Activated CD4-positive, alpha-beta T cell treated with anti-CD3 and anti-CD28 coated beads for 36 hours (primary cell): ENCODE measurements at regions of chr9 and their contacts with region 1.

Region 1: DNA sequence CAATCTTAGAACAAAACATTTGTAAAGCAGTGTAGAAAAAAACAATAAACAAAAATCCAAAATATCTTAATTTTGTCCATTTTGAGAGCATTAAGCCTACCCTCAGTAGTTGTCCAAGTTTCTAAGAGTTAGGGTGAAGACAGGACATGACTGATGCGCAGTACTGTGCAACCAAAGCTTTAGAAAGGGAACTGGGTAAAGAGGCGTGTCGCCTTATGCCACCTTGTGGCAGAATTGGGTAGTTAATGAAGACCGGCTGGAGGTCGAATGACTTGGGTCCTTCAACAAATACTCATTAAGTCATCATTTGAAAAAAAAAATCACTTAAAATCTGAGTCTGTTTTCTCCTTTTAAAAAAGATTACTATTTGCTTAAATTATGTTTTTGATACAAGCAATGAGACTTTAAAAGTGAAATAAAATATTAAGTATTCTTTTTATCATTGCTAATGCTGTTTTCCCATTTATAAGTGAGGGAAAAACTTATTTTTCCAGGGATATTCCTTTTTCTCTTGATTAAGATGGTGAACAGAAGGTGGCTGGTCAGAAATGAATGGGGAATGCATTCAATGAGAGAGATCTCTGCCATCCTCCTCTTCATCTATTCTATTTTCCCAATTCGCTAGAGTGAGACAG is 3.5 kb upstream of the RNF20 start:
- DNase-seq: peak; percentile 78
- ATAC-seq: peak; percentile 15
- H3K4me3 Mint-ChIP-seq: no peak overlapping the region
- H3K27ac Mint-ChIP-seq: no peak overlapping the region
- H3K4me1 Mint-ChIP-seq: peaks cover 20% of the 10 kb centered on the region
- H3K27me3 Mint-ChIP-seq: peaks cover 6% of the 10 kb centered on the region

Region 2: GRCh38 chr9:100352727-100353505 is 1177.3 kb before region 1 on chr9 and contains the start of gene TEX10:
- CTCF ChIA-PET with region 1: no interaction called
- POLR2A ChIA-PET with region 1: no interaction called
- intact Hi-C with region 1: loop called in 1 of 2 experiments (anchors 10 kb)
- DNase-seq: peak; percentile 93
- ATAC-seq: peak; percentile 93
- H3K4me3 Mint-ChIP-seq: peak within 1 kb of the TSS; percentile 95
- H3K27ac Mint-ChIP-seq: peak within 1 kb of the TSS; percentile 91
- H3K4me1 Mint-ChIP-seq: peaks cover 41% of the 10 kb centered on the region
- H3K27me3 Mint-ChIP-seq: no peaks in the 10 kb centered on the region
- total RNA-seq, gene TEX10: 24.8 to 27.5 TPM

Region 3: GRCh38 chr9:100714372-100715099 is 815.7 kb before region 1 on chr9:
- CTCF ChIA-PET with region 1: no interaction called
- POLR2A ChIA-PET with region 1: no interaction called
- intact Hi-C with region 1: loop called in 1 of 2 experiments (anchors 2 kb)
- DNase-seq: peak; percentile 77
- ATAC-seq: peak; percentile 53
- H3K4me3 Mint-ChIP-seq: no peak overlapping the region
- H3K27ac Mint-ChIP-seq: no peak overlapping the region
- H3K4me1 Mint-ChIP-seq: no peaks in the 10 kb centered on the region
- H3K27me3 Mint-ChIP-seq: peaks cover 5% of the 10 kb centered on the region

Region 4: GRCh38 chr9:101449140-101449721 is 81.0 kb before region 1 on chr9:
- CTCF ChIA-PET with region 1: interaction called, 9 read pairs
- POLR2A ChIA-PET with region 1: no interaction called
- intact Hi-C with region 1: loop called (anchors 2 kb)
- DNase-seq: peak; percentile 71
- ATAC-seq: peak; percentile 91
- H3K4me3 Mint-ChIP-seq: peak overlapping the region; percentile 45
- H3K27ac Mint-ChIP-seq: no peak overlapping the region
- H3K4me1 Mint-ChIP-seq: peaks cover 10% of the 10 kb centered on the region
- H3K27me3 Mint-ChIP-seq: peaks cover 54% of the 10 kb centered on the region

Region 5: DNA sequence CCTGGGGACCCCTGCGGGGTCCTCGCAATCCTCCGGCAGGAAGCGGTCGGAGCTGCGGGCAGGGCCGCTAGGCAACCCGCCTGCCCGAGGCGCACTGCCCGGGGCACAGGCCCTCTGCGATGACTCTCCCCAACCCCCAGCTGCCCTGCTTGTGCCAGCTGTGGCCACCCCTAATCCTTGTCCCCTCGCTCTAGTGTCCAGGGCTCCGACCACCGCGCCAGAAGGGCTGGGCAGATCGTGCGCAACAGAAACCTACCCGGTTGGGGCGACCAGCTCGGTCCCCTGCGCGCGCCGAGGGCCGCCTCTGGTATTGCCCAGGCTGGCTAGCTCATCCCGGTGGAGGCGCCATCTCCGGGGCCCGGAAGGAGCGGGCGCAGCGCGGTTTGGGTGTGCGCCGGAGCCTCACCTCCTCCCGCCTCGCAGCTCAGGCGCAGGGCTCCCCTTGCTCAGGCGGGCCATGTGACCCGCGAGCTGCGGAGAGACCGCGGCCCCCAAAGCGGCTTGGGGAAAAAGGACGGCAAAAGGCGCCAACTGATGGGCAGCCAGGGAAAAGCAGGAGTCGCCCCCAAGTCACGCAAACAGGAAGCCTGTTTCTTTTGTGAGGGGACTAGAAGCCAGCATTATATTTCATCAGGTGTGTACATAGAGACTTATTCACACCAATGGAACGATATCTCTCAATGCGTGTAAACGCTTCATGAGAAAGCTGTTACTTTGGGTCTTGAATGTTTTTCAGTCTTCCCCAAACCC is 43.3 kb before region 1 on chr9:
- CTCF ChIA-PET with region 1: interaction called, 11 read pairs
- POLR2A ChIA-PET with region 1: no interaction called
- intact Hi-C with region 1: no loop called
- DNase-seq: peak; percentile 45
- ATAC-seq: peak; percentile 68
- H3K4me3 Mint-ChIP-seq: peak overlapping the region; percentile 50
- H3K27ac Mint-ChIP-seq: no peak overlapping the region
- H3K4me1 Mint-ChIP-seq: peaks cover 4% of the 10 kb centered on the region
- H3K27me3 Mint-ChIP-seq: peaks cover 51% of the 10 kb centered on the region

Region 6: DNA sequence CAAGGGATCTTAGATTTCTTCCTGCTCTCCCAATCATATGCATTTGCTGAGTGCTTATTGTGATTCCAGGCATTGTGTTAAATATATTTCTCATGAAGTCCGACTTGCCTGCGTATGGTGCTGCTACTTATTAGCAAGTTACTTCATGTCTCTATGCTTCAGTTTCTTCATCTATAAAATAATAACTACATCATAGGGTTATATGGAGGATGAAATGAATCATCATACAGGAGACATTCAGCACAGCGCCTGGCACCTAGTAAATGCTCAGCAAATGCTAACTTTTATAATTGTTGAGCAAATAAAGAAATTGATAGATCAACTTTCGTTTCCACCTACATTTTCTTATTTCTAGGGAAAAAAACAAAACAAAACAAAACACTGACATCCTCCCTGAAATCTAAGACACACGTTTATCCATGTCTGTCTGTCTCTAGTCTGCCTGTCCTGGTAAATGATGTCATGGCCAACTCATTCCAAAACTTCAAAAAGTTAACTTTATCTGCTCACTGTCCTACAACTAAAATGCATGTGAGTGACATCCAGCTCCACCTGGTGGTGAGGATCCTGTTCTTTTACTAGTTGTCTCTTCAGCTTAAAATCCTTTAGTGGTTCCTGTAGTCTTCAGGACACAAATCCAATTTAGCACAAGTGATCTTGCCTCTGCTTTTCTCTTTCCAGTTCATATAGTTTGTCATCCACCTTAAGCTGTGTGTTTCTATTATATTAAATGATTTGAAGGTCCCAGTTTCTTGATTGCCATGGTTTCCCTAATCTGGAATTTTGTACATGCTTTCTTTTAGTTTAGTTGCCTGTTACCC is 36.9 kb after region 1 on chr9:
- CTCF ChIA-PET with region 1: no interaction called
- POLR2A ChIA-PET with region 1: no interaction called
- intact Hi-C with region 1: loop called (anchors 2 to 5 kb)
- DNase-seq: peak; percentile 70
- ATAC-seq: peak; percentile 68
- H3K4me3 Mint-ChIP-seq: no peak overlapping the region
- H3K27ac Mint-ChIP-seq: peak overlapping the region; percentile 8
- H3K4me1 Mint-ChIP-seq: peaks cover 55% of the 10 kb centered on the region
- H3K27me3 Mint-ChIP-seq: no peaks in the 10 kb centered on the region